ENCODE measurements at regions of chr5 and their contacts with region 1.

Region 1: DNA sequence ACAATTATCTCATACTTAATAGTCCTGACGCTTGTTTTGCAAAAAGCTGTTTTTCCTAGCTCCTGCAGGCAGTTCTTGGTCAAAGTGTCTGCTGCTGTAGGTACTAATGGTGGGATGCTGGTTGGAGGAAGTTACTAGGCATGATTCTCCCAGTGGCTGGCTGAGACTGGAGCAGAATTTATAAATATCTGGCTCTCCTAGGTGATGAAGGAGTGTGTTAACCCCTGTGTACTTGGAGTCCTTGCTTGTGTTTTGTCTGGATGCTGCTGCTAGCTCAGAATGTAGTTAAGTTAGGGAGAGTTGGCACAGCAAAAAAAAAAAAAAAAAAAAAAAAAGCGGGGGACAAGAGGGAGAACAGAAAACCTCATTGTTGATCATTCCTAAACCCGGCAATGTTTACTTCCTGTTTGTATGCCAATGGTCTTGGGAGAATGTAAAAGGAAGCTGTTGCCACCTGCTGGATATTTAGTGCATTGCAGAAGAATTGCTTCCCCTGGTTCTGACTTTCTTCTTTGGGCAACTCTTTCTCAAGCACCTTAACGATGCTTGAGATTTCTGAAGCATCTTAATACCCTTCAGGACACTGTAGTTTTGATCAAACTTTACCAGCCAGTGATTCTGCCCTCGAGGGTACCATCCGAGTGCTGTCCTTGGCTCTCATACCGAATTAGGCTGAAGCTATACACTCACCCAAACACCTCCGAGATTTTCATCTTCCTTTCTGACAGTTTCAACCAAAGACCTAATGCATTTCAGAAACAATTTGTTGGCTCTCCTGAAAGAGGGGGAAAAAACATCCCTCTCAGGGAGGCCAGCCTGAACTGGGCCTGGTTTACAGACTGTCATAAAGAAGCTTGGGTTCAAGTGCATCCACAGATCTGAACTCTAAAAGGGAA is 71.7 kb upstream of the WWC1 start:
- DNase-seq: peak in 1 of 5 donors; percentile 38
- ATAC-seq: peak; percentile 38 to 66 (median 44)
- H3K4me3 ChIP-seq: peak overlapping the region in 4 of 12 donors; percentile 9 to 39 (median 30)
- H3K27ac ChIP-seq: peak overlapping the region in 2 of 12 donors; percentile 14 to 29
- H3K4me1 ChIP-seq: peaks cover 0 to 29% (median 4%) of the 10 kb centered on the region in 12 donors
- H3K27me3 ChIP-seq: no peaks in the 10 kb centered on the region
- CTCF ChIP-seq: peak; percentile 75 to 91 (median 84)
- POLR2A ChIP-seq: no peak

Region 2: DNA sequence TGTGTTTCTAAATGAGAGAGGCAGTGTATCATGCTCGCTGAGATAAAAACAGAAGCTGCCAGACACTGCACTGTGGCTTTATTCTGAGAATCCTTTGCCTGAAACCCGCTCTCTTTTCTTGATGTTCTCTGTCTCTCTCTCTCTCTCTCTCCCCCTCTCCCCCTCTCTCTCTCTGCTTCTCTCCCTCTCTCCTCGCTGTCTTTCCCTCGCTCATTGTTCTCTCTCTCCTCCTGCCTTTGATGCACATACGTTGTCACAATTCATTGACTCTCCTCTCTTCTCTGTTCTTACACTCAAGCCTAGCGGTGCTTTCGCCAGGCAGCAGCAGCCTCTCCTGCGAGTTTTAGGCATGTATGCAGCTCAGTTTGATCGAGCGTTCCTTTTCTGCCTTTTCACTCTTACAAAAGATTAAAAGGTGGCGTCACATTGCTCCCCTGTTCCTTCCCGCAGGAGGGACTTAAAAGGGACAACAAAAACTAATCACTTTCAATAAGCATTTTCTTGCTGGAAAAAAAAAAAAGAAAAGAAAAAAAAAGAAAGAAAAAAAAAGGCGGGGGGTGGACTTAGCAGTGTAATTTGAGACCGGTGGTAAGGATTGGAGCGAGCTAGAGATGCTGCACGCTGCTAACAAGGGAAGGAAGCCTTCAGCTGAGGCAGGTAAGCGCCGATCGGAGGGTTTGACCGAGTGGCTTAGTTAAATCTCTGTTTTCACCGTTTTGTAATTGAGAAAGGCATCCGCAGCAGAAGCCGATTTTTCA is 646.2 kb before region 1 on chr5:
- intact Hi-C with region 1: loop called in 1 of 10 experiments (anchors 10 kb)
- DNase-seq: no peak
- ATAC-seq: peak in 2 of 4 donors; percentile 30 to 43
- H3K4me3 ChIP-seq: peak overlapping the region in 9 of 12 donors; percentile 3 to 41 (median 32)
- H3K27ac ChIP-seq: no peak overlapping the region
- H3K4me1 ChIP-seq: peaks cover 0 to 11% (median 0%) of the 10 kb centered on the region in 12 donors
- H3K27me3 ChIP-seq: peaks cover 3 to 79% (median 31%) of the 10 kb centered on the region in 9 donors
- CTCF ChIP-seq: no peak
- POLR2A ChIP-seq: no peak

Region 3: DNA sequence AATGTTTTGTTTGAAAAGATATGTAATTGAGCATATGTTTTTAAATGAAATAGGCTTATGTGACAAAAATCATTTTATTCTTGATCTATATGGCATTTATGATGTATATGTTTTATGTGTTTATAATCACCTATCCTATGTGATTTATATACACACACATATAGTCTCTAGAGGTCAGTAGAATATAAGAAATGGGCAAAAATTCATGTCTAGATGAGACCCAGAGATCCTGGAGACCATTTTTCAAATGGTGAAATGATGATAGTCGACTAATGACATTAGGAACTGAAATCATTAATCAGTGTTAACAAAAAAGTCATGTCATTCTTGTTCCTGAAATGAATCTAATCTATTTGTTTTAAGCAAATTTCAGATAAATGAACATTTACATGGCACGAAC is 637.5 kb before region 1 on chr5:
- intact Hi-C with region 1: loop called in 5 of 10 experiments (anchors 5 to 10 kb)
- DNase-seq: no peak
- ATAC-seq: no peak
- H3K4me3 ChIP-seq: no peak overlapping the region
- H3K27ac ChIP-seq: no peak overlapping the region
- H3K4me1 ChIP-seq: no peaks in the 10 kb centered on the region
- H3K27me3 ChIP-seq: peaks cover 0 to 24% (median 8%) of the 10 kb centered on the region in 9 donors
- CTCF ChIP-seq: peak in 2 of 12 donors; percentile 11 to 40
- POLR2A ChIP-seq: no peak

Region 4: GRCh38 chr5:167587772-167588437 is 631.9 kb before region 1 on chr5:
- intact Hi-C with region 1: loop called in 4 of 10 experiments (anchors 5 to 10 kb)
- DNase-seq: no peak
- ATAC-seq: peak in 1 of 4 donors; percentile 52
- H3K4me3 ChIP-seq: no peak overlapping the region
- H3K27ac ChIP-seq: no peak overlapping the region
- H3K4me1 ChIP-seq: no peaks in the 10 kb centered on the region
- H3K27me3 ChIP-seq: no peaks in the 10 kb centered on the region
- CTCF ChIP-seq: peak in 11 of 12 donors; percentile 11 to 52 (median 29)
- POLR2A ChIP-seq: no peak

Region 5: GRCh38 chr5:167945542-167946384 is 274.0 kb before region 1 on chr5:
- intact Hi-C with region 1: loop called in 1 of 10 experiments (anchors 10 kb)
- DNase-seq: peak; percentile 56 to 80 (median 65)
- ATAC-seq: peak; percentile 80 to 85 (median 82)
- H3K4me3 ChIP-seq: no peak overlapping the region
- H3K27ac ChIP-seq: peak overlapping the region; percentile 67 to 94 (median 86)
- H3K4me1 ChIP-seq: peaks cover 0 to 82% (median 36%) of the 10 kb centered on the region in 12 donors
- H3K27me3 ChIP-seq: no peaks in the 10 kb centered on the region
- CTCF ChIP-seq: no peak
- POLR2A ChIP-seq: no peak

Region 6: GRCh38 chr5:168114444-168115017 is 105.2 kb before region 1 on chr5:
- intact Hi-C with region 1: loop called in 5 of 10 experiments (anchors 5 to 10 kb)
- DNase-seq: peak in 1 of 5 donors; percentile 46
- ATAC-seq: peak; percentile 52 to 78 (median 64)
- H3K4me3 ChIP-seq: no peak overlapping the region
- H3K27ac ChIP-seq: no peak overlapping the region
- H3K4me1 ChIP-seq: peaks cover 0 to 12% (median 0%) of the 10 kb centered on the region in 12 donors
- H3K27me3 ChIP-seq: no peaks in the 10 kb centered on the region
- CTCF ChIP-seq: peak; percentile 31 to 66 (median 52)
- POLR2A ChIP-seq: no peak

Region 7: DNA sequence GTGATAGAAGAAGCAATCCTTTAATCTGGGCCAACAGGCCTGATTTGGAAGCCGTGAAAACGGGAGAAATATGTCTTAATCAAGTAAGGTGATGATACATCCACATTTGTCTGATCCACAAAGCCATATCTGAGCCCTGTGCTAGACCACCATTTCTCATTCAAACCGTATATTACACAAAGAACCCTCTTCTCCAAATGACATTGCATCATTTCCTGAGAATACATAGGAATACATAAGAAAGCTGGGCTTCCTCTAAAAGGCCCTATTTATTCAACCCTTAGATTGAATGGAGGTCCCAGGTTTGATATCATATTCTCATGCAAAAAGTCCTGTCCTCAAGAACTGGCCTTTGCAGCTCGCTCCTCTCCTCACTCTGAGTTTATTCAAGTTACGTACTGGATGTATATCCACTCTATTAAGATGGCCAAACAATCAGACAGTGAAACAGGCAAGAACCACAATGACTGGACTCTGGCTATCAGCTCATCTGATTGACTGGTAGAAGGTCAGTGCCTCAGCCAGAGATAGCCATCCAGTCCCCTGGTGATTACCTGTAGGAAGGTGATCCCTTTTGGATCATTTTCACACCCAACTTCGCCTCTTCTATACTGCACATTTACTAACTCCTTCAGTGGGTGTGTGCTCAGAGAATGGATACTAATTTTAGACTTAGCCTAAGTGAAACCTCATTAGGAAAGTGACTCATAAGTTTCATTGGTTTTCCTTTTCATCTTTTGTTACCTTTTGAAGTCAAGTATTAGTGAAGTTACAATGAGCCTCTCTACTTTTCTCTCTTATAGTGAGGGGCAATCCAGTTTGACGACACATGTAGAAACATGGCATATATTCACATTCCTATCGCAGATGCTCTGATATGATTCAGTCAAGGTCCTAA is 95.9 kb before region 1 on chr5:
- intact Hi-C with region 1: loop called in 6 of 10 experiments (anchors 1 to 10 kb)
- DNase-seq: no peak
- ATAC-seq: peak in 3 of 4 donors; percentile 7 to 37 (median 28)
- H3K4me3 ChIP-seq: no peak overlapping the region
- H3K27ac ChIP-seq: peak overlapping the region in 4 of 12 donors; percentile 20 to 56 (median 37)
- H3K4me1 ChIP-seq: peaks cover 0 to 47% (median 9%) of the 10 kb centered on the region in 12 donors
- H3K27me3 ChIP-seq: no peaks in the 10 kb centered on the region
- CTCF ChIP-seq: no peak
- POLR2A ChIP-seq: no peak